Left lung (tissue), 14 donors: ENCODE measurements at regions of chr7 and their contacts with region 1.

Region 1: DNA sequence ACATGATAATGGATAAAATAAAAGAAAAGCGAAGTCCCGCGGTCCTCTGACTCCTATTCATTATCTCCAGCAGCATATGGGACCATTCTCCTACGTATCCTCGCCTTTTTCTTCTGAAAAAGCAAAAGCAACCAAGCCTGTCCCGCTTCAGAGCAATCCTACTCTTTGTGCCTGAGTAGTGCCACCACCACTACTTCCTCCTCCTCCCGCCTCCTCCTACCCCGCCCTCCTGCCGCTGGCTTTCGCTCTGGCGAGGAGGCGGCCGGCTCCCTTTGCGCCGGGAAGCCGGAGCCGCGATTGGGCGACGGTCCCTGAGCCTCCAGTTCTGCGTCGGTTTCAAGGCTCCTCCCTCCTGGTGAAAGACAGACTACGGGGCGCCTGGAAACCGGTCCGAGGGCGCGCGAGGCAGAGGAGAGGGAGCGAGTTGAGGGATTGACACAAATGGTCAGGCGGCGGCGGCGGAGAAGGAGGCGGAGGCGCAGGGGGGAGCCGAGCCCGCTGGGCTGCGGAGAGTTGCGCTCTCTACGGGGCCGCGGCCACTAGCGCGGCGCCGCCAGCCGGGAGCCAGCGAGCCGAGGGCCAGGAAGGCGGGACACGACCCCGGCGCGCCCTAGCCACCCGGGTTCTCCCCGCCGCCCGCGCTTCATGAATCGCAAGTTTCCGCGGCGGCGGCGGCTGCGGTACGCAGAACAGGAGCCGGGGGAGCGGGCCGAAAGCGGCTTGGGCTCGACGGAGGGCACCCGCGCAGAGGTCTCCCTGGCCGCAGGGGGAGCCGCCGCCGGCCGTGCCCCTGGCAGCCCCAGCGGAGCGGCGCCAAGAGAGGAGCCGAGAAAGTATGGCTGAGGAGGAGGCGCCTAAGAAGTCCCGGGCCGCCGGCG is at the start of gene FZD1:
- DNase-seq: peak; percentile 97 to 99 (median 97)
- ATAC-seq: peak; percentile 93
- H3K4me3 ChIP-seq: peak within 1 kb of the TSS; percentile 71 to 81
- H3K27ac ChIP-seq: peak within 1 kb of the TSS; percentile 95 to 99
- H3K4me1 ChIP-seq: peaks cover 0 to 28% of the 10 kb centered on the region in 2 donors
- H3K27me3 ChIP-seq: peaks cover 0 to 39% of the 10 kb centered on the region in 2 donors
- CTCF ChIP-seq: no peak
- polyA plus RNA-seq, gene FZD1: 51.6 to 70.2 (median 61.0) TPM

Region 2: GRCh38 chr7:91089382-91089963 is 174.8 kb before region 1 on chr7:
- intact Hi-C with region 1: loop called in 1 of 2 experiments (anchors 10 kb)
- DNase-seq: peak in 2 of 4 donors; percentile 65 to 71
- ATAC-seq: peak; percentile 91
- H3K4me3 ChIP-seq: no peak overlapping the region
- H3K27ac ChIP-seq: no peak overlapping the region
- H3K4me1 ChIP-seq: no peaks in the 10 kb centered on the region
- H3K27me3 ChIP-seq: no peaks in the 10 kb centered on the region
- CTCF ChIP-seq: peak; percentile 60 to 71

Region 3: GRCh38 chr7:91156316-91157185 is 107.7 kb before region 1 on chr7:
- intact Hi-C with region 1: no loop called
- DNase-seq: no peak
- ATAC-seq: no peak
- H3K4me3 ChIP-seq: no peak overlapping the region
- H3K27ac ChIP-seq: no peak overlapping the region
- H3K4me1 ChIP-seq: no peaks in the 10 kb centered on the region
- H3K27me3 ChIP-seq: no peaks in the 10 kb centered on the region
- CTCF ChIP-seq: no peak

Region 4: DNA sequence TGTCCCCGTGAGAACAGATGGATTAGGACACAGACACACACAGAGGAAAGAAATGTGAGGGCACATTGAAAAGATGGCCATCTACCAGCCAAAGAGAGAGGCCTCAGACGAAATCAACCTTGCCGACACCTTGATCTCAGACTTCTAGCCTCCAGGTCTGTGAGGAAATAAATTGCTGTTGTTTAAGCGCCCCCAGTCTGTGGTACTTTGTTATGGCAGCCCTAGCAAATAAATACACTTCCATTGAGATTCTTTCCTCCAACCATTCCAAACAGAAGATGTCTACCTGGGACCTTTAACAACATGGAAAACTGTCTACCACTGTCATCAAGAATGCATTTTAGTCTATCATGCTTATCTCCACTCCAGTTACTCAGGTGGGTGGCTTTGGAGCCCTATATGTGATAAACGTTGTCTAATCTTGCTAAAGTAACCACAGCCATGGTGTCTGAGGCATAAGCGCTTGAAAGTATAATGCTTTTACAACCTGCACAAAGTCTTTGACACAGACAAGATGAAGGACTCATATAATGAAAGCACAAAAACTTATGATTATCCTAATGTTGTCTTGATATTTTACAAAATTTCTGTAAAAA is 371.9 kb after region 1 on chr7:
- intact Hi-C with region 1: loop called in 1 of 2 experiments (anchors 10 kb)
- DNase-seq: peak in 1 of 4 donors; percentile 23
- ATAC-seq: peak; percentile 78
- H3K4me3 ChIP-seq: no peak overlapping the region
- H3K27ac ChIP-seq: no peak overlapping the region
- H3K4me1 ChIP-seq: no peaks in the 10 kb centered on the region
- H3K27me3 ChIP-seq: no peaks in the 10 kb centered on the region
- CTCF ChIP-seq: peak; percentile 24 to 45